ENCODE measurements at regions of chr14 and their contacts with region 1.

Region 1: GRCh38 chr14:44912041-44912869 is 49.5 kb downstream of the KLHL28 start:
- DNase-seq: no peak
- ATAC-seq: no peak
- H3K4me3 ChIP-seq: no peak overlapping the region
- H3K27ac ChIP-seq: no peak overlapping the region
- H3K4me1 ChIP-seq: no peaks in the 10 kb centered on the region
- CTCF ChIP-seq: no peak
- EP300 ChIP-seq: no peak
- POLR2A ChIP-seq: no peak
- RAD21 ChIP-seq: no peak

Region 2: GRCh38 chr14:44701563-44702263 is 210.5 kb before region 1 on chr14:
- CTCF ChIA-PET with region 1: no interaction called
- POLR2A ChIA-PET with region 1: no interaction called
- DNase-seq: no peak
- ATAC-seq: no peak
- H3K4me3 ChIP-seq: no peak overlapping the region
- H3K27ac ChIP-seq: no peak overlapping the region
- H3K4me1 ChIP-seq: no peaks in the 10 kb centered on the region
- CTCF ChIP-seq: no peak
- EP300 ChIP-seq: no peak
- POLR2A ChIP-seq: no peak
- RAD21 ChIP-seq: no peak

Region 3: DNA sequence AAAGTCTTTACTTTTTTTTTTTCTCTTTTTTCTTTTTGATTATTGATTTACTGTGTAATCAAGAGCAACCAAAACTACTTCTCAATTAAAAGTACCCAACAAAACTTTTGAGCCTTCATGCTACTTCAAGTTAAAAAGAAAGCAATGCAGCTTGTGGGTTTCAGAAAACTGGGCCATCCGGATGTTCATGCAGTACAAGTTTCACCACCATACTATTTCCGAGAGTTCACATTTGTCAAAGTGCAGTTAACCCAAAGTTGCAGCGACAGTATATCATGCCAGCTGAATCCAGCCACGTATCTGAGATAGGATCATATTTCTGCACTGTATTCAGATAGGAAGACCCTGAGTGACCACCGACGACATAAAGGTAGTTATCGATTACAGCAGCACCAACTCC is 16.5 kb after region 1 on chr14:
- CTCF ChIA-PET with region 1: interaction called, 10 read pairs
- POLR2A ChIA-PET with region 1: no interaction called
- DNase-seq: no peak
- ATAC-seq: no peak
- H3K4me3 ChIP-seq: no peak overlapping the region
- H3K27ac ChIP-seq: no peak overlapping the region
- H3K4me1 ChIP-seq: no peaks in the 10 kb centered on the region
- CTCF ChIP-seq: no peak
- EP300 ChIP-seq: no peak
- POLR2A ChIP-seq: no peak
- RAD21 ChIP-seq: no peak

Region 4: GRCh38 chr14:45134051-45134958 is 222.1 kb after region 1 on chr14 and contains the start of gene FKBP3:
- CTCF ChIA-PET with region 1: interaction called, 11 read pairs
- POLR2A ChIA-PET with region 1: no interaction called
- DNase-seq: peak; percentile 97 to 99
- ATAC-seq: peak; percentile 93 to 94
- H3K4me3 ChIP-seq: peak within 1 kb of the TSS; percentile 78
- H3K27ac ChIP-seq: peak within 1 kb of the TSS; percentile 91 to 96
- H3K4me1 ChIP-seq: peaks cover 20% of the 10 kb centered on the region
- CTCF ChIP-seq: peak; percentile 37
- EP300 ChIP-seq: no peak
- POLR2A ChIP-seq: peak; percentile 87
- RAD21 ChIP-seq: peak; percentile 19 to 28; a peak in 1 of 5 replicates
- polyA plus RNA-seq, gene FKBP3: 106 and 202 TPM in 2 replicates

Region 5: DNA sequence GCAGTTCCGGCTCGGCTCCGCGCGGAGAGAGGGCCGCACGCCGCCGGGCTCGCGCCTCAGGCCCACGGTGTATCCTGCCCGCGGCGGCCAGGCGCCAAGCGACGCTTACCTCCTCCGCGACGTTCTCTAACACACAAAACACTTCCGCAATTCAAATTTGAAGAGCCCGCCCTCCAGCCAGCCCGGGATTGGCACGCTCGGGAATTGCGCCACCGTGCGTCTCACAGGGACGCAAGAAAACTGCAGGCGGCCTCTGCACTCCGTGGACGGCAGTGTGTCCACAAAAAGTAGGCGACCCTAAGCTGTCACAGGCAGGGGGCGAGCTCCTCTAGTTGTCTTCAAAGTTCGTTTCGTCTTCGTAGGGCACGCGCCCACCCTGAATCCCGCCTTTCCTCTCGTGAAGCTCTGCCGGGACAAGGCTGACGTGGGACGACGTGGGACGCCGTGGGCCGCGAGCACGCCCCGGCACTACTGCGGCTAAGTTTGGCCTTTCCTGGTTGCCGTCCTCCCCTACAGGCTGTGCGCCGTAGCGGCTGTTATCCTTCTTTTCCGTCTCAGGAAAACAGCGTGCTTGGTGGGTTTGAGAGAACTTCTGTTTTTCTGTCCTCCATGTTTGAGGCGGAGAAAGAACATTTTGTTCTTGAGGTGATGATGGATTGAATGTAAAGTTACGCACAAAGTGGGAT is 341.0 kb after region 1 on chr14 and contains the start of gene MIS18BP1:
- CTCF ChIA-PET with region 1: interaction called, 23 read pairs
- POLR2A ChIA-PET with region 1: interaction called, 7 read pairs
- DNase-seq: peak; percentile 86 to 98
- ATAC-seq: peak; percentile 89 to 95
- H3K4me3 ChIP-seq: peak within 1 kb of the TSS; percentile 72
- H3K27ac ChIP-seq: peak within 1 kb of the TSS; percentile 82 to 92
- H3K4me1 ChIP-seq: peaks cover 22% of the 10 kb centered on the region; the same call in 2 of the 3 replicates
- CTCF ChIP-seq: peak; percentile 66
- EP300 ChIP-seq: 0 out of 5 replicates have a peak, but pooled peaks of 1 of the 2 experiments have one; percentile 14
- POLR2A ChIP-seq: peak; percentile 51
- RAD21 ChIP-seq: no peak; a peak in 1 of 5 replicates
- polyA plus RNA-seq, gene MIS18BP1: 28.0 and 38.0 TPM in 2 replicates